A673 (cell line): ENCODE measurements at regions of chr1 and their contacts with region 1.

Region 1: DNA sequence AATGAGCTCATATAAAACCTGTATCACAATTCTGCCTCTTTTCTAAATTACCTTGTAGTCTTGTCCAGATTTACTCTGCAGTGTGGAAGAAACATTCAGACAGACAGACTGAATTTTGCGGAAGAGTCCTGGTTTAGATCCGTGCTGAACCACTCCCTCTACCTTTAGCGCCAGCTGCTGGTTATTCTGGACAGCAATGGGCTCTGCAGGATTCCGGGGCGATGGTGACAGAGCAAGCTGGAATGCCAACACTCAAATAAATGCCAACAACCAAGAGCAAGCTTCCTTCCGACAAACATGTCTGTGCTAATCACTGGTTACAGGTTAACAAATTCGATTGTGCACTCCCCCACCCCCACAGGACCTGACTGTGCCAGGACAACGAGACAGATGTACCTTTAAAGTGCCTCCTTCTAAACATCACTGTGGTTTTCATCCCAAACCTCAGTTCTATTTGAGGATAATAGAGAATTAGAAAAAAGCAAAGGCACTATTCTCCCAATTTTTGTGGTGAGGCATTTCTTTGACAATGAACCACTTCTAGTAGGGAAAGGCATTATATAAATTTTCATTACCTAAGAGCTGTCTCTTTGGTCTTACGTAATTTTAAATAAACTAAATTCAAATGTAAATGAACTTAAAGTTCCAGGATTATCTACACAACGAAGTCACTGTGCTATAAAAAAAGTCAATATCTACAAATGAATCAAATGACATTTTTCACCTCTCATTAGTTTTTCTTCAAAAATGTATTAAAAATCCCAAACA is 90.4 kb downstream of the INTS7 start:
- DNase-seq: no peak
- H3K4me3 ChIP-seq: no peak overlapping the region
- H3K27ac ChIP-seq: no peak overlapping the region
- H3K4me1 ChIP-seq: no peaks in the 10 kb centered on the region
- H3K27me3 ChIP-seq: no peaks in the 10 kb centered on the region
- CTCF ChIP-seq: peak; percentile 43; the same call in 1 of the 2 replicates

Region 2: DNA sequence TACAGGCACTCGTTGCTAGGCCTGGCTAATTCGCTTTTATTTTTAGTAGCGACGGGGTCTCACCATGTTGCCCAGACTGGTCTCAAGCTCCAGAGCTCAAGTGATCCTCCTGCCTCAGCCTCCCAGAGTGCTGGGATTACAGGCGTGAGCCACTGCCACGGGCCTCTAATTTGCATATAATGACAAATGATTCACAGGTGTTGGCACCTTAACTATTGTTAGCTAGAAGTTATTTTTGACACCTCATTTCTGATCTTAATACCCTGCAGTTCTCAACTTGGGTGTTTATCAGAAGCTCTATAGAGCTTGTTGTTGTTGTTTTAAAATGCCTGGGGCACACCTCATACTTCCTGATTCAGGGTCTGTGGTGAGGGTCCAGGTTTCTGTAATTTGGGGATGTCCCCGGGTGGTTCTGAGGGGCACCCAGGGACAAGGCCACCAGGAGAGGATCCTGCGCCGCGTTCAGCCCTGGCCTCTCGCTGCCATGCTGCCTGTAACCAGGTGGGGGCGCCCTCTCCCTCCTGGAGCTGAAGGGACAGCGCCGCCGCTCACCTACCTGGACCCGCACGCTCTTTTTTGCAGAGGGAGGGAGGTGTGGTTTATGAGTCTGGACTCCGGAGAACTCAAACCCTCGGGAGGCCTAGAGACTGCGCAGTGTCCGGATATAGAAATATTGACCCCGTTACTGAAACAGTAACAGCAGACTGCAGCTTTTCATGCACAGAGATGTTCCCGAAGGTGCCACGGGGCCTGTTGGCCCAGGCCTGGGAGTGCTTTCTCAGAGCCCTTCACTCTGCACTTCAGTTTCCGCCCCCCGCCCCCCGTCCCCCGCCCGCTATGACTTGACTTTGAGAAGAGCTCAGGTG is 246.5 kb before region 1 on chr1:
- CTCF ChIA-PET with region 1: no interaction called
- POLR2A ChIA-PET with region 1: no interaction called
- intact Hi-C with region 1: loop called (anchors 10 kb)
- DNase-seq: peak; percentile 77
- H3K4me3 ChIP-seq: no peak overlapping the region
- H3K27ac ChIP-seq: no peak overlapping the region
- H3K4me1 ChIP-seq: peaks cover 15% of the 10 kb centered on the region
- H3K27me3 ChIP-seq: no peaks in the 10 kb centered on the region
- CTCF ChIP-seq: peak; percentile 99

Region 3: GRCh38 chr1:211752951-211753486 is 191.9 kb before region 1 on chr1:
- CTCF ChIA-PET with region 1: no interaction called
- POLR2A ChIA-PET with region 1: no interaction called
- intact Hi-C with region 1: no loop called
- DNase-seq: no peak
- H3K4me3 ChIP-seq: no peak overlapping the region
- H3K27ac ChIP-seq: no peak overlapping the region
- H3K4me1 ChIP-seq: no peaks in the 10 kb centered on the region
- H3K27me3 ChIP-seq: no peaks in the 10 kb centered on the region
- CTCF ChIP-seq: no peak

Region 4: DNA sequence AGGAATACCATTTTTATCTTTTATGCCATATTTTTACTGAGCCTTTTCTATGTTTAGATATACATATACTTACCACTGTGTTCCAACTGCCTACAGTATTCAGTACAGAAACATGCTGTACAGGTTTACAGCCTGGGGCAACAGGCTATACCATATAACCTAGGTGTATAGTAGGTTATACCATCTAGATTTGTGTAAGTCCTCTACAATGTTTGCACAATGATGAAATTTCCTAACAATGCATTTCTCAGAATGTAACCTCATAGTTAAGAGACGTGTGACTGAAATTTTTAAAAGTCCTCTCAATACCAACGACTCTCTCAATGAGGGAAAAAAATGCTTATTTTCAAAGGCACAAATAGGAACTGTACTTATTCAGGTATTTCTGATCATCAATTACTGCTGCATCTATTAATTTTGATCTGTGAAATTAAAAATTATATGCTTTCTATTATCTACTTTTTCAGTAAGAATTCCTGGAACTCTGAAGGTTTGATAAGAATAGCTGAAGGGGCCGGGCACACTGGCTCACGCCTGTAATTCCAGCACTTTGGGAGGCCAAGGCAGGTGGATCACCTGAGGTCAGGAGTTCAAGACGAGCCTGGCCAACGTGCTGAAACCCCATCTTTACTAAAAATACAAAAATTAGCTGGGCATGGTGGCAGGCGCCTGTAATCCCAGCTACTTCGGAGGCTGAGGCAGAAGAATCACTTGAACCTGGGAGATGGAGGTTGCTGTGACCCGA is 68.9 kb after region 1 on chr1:
- CTCF ChIA-PET with region 1: interaction called, 11 read pairs
- POLR2A ChIA-PET with region 1: no interaction called
- intact Hi-C with region 1: no loop called
- DNase-seq: no peak
- H3K4me3 ChIP-seq: no peak overlapping the region
- H3K27ac ChIP-seq: no peak overlapping the region
- H3K4me1 ChIP-seq: no peaks in the 10 kb centered on the region
- H3K27me3 ChIP-seq: no peaks in the 10 kb centered on the region
- CTCF ChIP-seq: no peak